Heart right ventricle (tissue), 16 donors: ENCODE measurements at regions of chr3 and their contacts with region 1.

Region 1: GRCh38 chr3:33729993-33730392 is 11.9 kb upstream of the CLASP2 start:
- DNase-seq: no peak
- ATAC-seq: no peak
- H3K4me3 ChIP-seq: no peak overlapping the region
- H3K27ac ChIP-seq: no peak overlapping the region
- H3K4me1 ChIP-seq: no peaks in the 10 kb centered on the region
- H3K27me3 ChIP-seq: no peaks in the 10 kb centered on the region
- CTCF ChIP-seq: no peak

Region 2: GRCh38 chr3:33787328-33788009 is 57.5 kb after region 1 on chr3:
- intact Hi-C with region 1: loop called in 2 of 10 experiments (anchors 5 to 10 kb)
- DNase-seq: peak in 1 of 2 donors; percentile 57
- ATAC-seq: peak; percentile 71 to 93 (median 85)
- H3K4me3 ChIP-seq: peak overlapping the region in 7 of 10 donors; percentile 11 to 43 (median 35)
- H3K27ac ChIP-seq: no peak overlapping the region
- H3K4me1 ChIP-seq: peaks cover 0 to 9% (median 0%) of the 10 kb centered on the region in 9 donors
- H3K27me3 ChIP-seq: no peaks in the 10 kb centered on the region
- CTCF ChIP-seq: peak; percentile 58 to 91 (median 79)

Region 3: GRCh38 chr3:34178415-34178814 is 448.4 kb after region 1 on chr3:
- intact Hi-C with region 1: no loop called
- DNase-seq: no peak
- ATAC-seq: no peak
- H3K4me3 ChIP-seq: no peak overlapping the region
- H3K27ac ChIP-seq: no peak overlapping the region
- H3K4me1 ChIP-seq: no peaks in the 10 kb centered on the region
- H3K27me3 ChIP-seq: peaks cover 0 to 6% (median 0%) of the 10 kb centered on the region in 7 donors
- CTCF ChIP-seq: no peak